ENCODE measurements at regions of chr20 and their contacts with region 1.

Region 1: DNA sequence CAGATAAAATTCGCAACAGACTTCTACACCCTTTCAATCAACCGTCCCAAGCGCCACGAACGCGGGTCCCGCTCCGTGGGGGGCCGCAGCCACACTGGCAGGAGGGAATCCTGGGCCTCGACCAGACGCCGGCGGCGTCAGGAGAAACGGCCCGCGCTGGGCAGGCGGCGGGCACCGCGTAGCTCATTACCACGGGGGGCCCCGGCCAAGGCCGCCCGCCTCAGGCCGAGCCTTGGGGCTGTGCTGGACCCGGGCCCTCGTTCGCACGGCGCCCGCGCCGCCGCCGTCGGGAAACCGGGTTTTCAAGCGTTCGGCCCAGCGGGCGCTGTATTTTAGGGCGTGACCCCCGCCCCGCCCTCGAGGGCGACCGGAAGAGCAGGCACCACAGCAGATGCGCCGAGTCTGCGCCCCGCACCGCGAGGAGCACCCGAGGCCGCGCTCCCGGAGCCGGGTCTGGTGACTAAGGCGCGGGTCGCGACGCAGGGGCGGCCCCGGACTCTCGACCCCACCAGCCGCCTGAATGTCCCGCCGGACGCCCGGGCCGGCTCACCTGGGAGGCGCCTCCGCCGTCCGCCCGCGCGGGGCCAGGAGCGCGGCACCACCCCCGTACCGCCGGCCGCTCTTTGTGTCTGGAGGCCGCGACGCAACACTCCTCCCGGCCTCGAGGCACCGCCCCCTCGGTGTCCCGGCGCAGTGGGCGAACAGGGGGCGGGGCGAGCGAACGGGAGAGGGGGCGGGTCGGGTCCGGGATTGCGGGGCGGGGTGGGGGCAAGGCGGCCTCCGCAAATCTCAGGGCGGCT is at the start of gene NINL:
- DNase-seq: peak; percentile 82
- ATAC-seq: peak; percentile 89
- H3K4me3 ChIP-seq: peak within 1 kb of the TSS; percentile 74 to 83 (median 80)
- H3K27ac ChIP-seq: peak within 1 kb of the TSS; percentile 84
- H3K4me1 ChIP-seq: peaks cover 59% of the 10 kb centered on the region
- H3K27me3 ChIP-seq: no peaks in the 10 kb centered on the region; a peak in 1 of 5 replicates
- CTCF ChIP-seq: peak; percentile 19; the same call in 1 of the 2 replicates
- EP300 ChIP-seq: no peak; a peak in 1 of 4 replicates
- POLR2A ChIP-seq: peak; percentile 58 to 96
- RAD21 ChIP-seq: peak; percentile 74
- total RNA-seq, gene NINL: 23.3 and 34.3 TPM in 2 replicates

Region 2: DNA sequence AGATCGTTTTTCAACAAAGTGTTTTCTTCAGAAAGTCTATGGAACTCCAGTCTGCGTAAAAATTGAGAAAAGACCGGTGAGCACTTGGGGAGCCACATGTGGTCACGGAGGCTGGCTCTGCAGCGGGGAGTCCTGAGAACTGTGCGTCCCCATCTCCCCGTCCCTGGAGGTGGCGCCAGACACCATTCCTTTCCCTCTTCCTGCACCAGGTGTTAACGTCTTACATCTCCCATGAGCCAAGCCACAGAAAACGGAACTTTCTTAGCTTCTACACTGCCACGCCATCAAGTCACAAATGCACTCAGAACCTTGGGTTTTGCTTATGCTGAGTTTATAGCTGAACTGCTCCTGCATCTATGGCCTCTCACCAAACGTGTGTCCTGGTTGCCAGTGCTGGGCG is 115.1 kb before region 1 on chr20:
- CTCF ChIA-PET with region 1: no interaction called
- POLR2A ChIA-PET with region 1: no interaction called
- in situ Hi-C with region 1: no loop called
- intact Hi-C with region 1: no loop called
- DNase-seq: peak; percentile 57
- ATAC-seq: peak; percentile 85
- H3K4me3 ChIP-seq: no peak overlapping the region
- H3K27ac ChIP-seq: no peak overlapping the region
- H3K4me1 ChIP-seq: no peaks in the 10 kb centered on the region
- H3K27me3 ChIP-seq: no peaks in the 10 kb centered on the region
- CTCF ChIP-seq: peak; percentile 90
- EP300 ChIP-seq: no peak
- POLR2A ChIP-seq: no peak
- RAD21 ChIP-seq: peak; percentile 82

Region 3: DNA sequence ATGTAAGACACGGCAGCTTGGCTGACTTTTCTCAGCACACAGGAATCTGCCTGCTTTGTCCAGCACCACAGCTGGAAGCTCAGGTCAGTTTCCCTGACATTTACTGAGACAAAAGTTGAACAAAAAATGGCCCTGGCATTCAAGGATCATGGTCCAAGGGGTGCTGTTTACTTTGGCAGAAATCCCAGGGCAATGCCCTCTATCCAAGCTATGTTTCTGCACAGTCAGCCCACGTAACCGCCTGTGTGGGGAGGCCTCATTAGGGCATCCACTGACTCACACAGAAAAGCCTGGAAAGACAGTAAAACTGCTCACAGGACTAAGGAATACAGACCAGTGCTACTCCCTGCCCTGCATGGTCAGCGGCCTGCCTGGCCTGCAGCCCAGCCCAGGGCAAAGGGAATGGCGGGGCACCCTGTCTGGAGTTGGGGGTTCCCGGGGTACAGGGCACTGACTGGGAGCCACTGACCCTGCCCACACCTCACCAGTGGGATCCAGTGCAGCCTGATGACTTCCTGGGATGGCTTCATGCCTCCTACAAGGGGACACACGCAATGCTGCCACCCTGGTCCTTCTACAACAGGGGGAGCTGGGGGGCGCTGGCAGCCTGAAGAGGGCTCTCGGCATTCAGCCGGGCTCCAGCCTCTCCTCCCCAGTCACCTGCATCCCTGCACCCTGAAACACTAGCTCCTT is 76.9 kb before region 1 on chr20:
- CTCF ChIA-PET with region 1: no interaction called
- POLR2A ChIA-PET with region 1: interaction called, 58 read pairs
- in situ Hi-C with region 1: no loop called
- intact Hi-C with region 1: loop called (anchors 1 kb)
- DNase-seq: peak; percentile 100
- ATAC-seq: peak; percentile 96
- H3K4me3 ChIP-seq: peak overlapping the region in 1 of 3 experiments; percentile 59; a peak in 2 of 6 replicates
- H3K27ac ChIP-seq: peak overlapping the region; percentile 90
- H3K4me1 ChIP-seq: peaks cover 29% of the 10 kb centered on the region
- H3K27me3 ChIP-seq: no peaks in the 10 kb centered on the region
- CTCF ChIP-seq: no peak; the same call in 1 of the 2 replicates
- EP300 ChIP-seq: peak; percentile 96 to 98
- POLR2A ChIP-seq: peak; percentile 44 to 71; a peak in 3 of 4 replicates
- RAD21 ChIP-seq: peak; percentile 54

Region 4: GRCh38 chr20:25539742-25540672 is 45.1 kb before region 1 on chr20:
- CTCF ChIA-PET with region 1: no interaction called
- POLR2A ChIA-PET with region 1: interaction called, 47 read pairs
- in situ Hi-C with region 1: no loop called
- intact Hi-C with region 1: loop called (anchors 1 kb)
- DNase-seq: no peak
- ATAC-seq: peak; percentile 17
- H3K4me3 ChIP-seq: peak overlapping the region in 1 of 3 experiments; percentile 44; a peak in 1 of 6 replicates
- H3K27ac ChIP-seq: peak overlapping the region; percentile 59
- H3K4me1 ChIP-seq: peaks cover 73% of the 10 kb centered on the region
- H3K27me3 ChIP-seq: no peaks in the 10 kb centered on the region
- CTCF ChIP-seq: peak; percentile 53
- EP300 ChIP-seq: no peak
- POLR2A ChIP-seq: no peak
- RAD21 ChIP-seq: peak; percentile 47; the same call in 1 of the 2 replicates

Region 5: GRCh38 chr20:25623736-25624499 is 38.8 kb after region 1 on chr20 and contains the start of gene NANP:
- CTCF ChIA-PET with region 1: no interaction called
- POLR2A ChIA-PET with region 1: interaction called, 23 read pairs
- in situ Hi-C with region 1: loop called (anchors 5 kb)
- intact Hi-C with region 1: loop called (anchors 1 kb)
- DNase-seq: peak; percentile 100
- ATAC-seq: peak; percentile 91
- H3K4me3 ChIP-seq: peak within 1 kb of the TSS; percentile 75 to 87 (median 80)
- H3K27ac ChIP-seq: peak within 1 kb of the TSS; percentile 96
- H3K4me1 ChIP-seq: peaks cover 51% of the 10 kb centered on the region
- H3K27me3 ChIP-seq: no peaks in the 10 kb centered on the region; a peak in 1 of 5 replicates
- CTCF ChIP-seq: peak; percentile 65
- EP300 ChIP-seq: peak in 1 of 2 experiments; percentile 30; a peak in 2 of 4 replicates
- POLR2A ChIP-seq: peak; percentile 97 to 98
- RAD21 ChIP-seq: peak; percentile 62
- total RNA-seq, gene NANP: 21.5 and 31.0 TPM in 2 replicates

Region 6: DNA sequence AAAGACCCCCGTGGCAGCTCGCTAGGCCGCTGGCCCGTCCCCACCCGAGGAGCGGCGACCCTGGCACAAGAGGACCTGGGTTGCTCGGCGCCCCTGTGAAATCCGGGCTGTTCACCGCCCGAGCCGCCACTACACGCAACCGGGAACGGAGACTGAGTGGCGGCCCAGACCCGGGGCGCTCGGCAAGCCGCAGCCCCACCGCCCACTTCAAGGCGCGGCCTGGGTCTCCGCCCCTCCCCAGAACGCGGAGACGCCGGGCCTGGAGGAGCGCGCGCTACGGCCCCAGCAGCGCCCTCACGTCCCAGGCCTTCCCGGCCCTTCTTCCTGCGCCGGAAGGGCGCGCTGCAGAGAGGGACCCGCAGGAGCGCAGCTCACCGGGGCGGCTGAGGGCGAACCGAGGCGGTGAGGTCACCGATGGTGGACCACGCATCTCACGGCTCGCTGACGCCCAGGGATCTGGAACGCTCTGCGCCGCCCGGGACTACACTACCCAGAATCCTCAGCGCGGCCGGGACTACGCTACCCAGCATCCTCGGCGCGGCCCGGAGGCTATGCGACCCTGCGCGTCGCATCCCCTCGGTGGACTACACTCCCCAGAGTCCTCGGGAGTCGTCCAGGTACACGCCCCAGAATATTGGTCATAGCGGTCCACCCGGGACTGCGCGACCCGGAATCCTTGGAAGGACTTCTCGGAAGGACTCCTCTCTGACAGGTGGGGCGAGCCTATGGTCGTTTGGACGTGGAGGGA is 111.5 kb after region 1 on chr20 and contains the start of gene ZNF337:
- CTCF ChIA-PET with region 1: no interaction called
- POLR2A ChIA-PET with region 1: interaction called, 7 read pairs
- in situ Hi-C with region 1: no loop called
- intact Hi-C with region 1: loop called (anchors 2 kb)
- DNase-seq: peak; percentile 98
- ATAC-seq: peak; percentile 97
- H3K4me3 ChIP-seq: peak within 1 kb of the TSS; percentile 89 to 100 (median 94)
- H3K27ac ChIP-seq: peak within 1 kb of the TSS; percentile 87
- H3K4me1 ChIP-seq: peaks cover 34% of the 10 kb centered on the region
- H3K27me3 ChIP-seq: no peaks in the 10 kb centered on the region
- CTCF ChIP-seq: peak; percentile 86
- EP300 ChIP-seq: no peak; a peak in 2 of 4 replicates
- POLR2A ChIP-seq: peak; percentile 87 to 90
- RAD21 ChIP-seq: peak; percentile 92
- total RNA-seq, gene ZNF337: 19.0 and 19.6 TPM in 2 replicates